OCI-LY7 (cell line): ENCODE measurements at regions of chr20 and their contacts with region 1.

Region 1: GRCh38 chr20:62104791-62105345 is 17.4 kb upstream of the LSM14B start:
- DNase-seq: no peak
- H3K4me3 ChIP-seq: no peak overlapping the region
- H3K27ac ChIP-seq: no peak overlapping the region
- H3K4me1 ChIP-seq: no peaks in the 10 kb centered on the region
- CTCF ChIP-seq: no peak

Region 2: DNA sequence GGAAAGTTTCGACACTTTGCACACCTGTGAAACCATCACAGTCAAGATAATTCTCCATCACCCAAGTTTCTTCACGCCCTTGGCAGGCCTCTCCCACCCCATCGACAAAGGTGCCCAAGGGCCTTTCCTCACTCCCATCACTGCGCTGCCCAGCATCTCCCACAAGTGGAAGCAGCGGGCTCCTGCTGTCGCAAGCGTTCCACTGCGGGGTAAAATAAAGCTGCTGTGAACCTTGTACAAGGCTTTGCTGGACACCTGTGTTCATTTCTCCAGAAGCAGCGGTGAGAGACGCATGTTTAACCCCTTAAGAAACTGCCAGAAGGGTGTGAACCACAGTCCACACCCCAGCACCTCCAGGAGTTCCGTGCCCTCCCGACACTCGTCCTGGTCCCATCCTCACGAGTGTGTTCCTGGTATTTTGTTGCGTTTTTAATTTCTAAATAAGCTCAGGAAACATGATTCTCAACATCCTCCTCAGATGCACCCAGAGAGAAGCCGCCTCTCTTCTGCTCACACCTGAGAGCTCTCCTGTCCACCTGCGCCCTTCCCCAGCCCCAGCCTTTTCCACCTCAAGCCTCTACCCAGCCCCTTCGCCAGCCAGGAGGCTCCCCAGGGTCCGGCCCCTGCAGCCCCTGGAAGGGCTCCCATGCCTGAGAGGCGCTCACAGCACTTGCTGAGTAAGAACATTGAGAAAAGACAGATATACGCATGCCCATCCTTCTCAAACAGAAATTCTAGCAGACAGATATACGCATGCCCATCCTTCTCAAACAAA is 136.6 kb before region 1 on chr20:
- CTCF ChIA-PET with region 1: interaction called, 11 read pairs
- POLR2A ChIA-PET with region 1: no interaction called
- intact Hi-C with region 1: no loop called
- DNase-seq: no peak
- H3K4me3 ChIP-seq: no peak overlapping the region
- H3K27ac ChIP-seq: no peak overlapping the region
- H3K4me1 ChIP-seq: no peaks in the 10 kb centered on the region
- CTCF ChIP-seq: no peak